RWPE1 (cell line): ENCODE measurements at regions of chr17 and their contacts with region 1.

Region 1: DNA sequence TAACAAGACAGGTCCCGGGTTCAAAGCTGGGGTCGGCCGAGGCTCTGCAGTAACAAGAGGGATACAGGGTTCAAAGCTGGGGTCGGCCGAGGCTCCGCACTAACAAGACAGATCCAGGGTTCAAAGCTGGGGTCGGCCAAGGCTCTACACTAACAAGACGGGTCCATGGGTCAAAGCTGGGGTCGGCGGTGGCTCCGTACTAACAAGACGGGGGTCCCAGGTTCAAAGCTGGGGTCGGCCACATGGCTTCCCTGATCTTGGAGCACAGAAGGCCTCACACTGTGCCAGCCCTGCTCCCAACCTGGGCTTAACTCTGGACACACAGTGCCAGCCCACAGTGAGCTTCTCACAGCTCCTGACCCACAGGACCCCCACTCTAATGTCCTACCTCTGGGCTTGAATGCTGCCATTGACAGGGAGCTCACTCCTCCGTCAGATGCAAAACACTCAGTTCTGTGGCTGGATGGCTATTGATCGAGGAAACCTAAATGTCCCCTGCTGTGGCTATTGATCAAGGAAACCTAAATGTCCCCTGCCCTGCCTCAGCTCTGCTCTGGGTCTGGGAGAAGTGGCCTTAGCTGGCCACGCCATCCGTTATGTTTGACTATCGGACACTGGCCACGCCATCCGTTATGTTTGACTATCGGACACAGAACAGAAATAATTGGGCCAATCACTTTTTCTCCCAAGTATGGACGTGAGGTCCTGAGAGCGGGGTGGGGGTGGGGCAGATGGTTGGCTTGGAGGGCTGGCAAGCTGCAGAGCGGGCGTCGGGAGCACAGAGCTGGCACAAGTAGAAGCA is 54.6 kb upstream of the DOC2B start:
- DNase-seq: no peak
- H3K27ac ChIP-seq: no peak overlapping the region
- CTCF ChIP-seq: no peak

Region 2: GRCh38 chr17:161481-161880 is 74.6 kb before region 1 on chr17:
- CTCF ChIA-PET with region 1: interaction called, 10 read pairs
- POLR2A ChIA-PET with region 1: no interaction called
- DNase-seq: no peak
- H3K27ac ChIP-seq: no peak overlapping the region
- CTCF ChIP-seq: no peak